B cell (primary cell): ENCODE measurements at regions of chr1 and their contacts with region 1.

Region 1: GRCh38 chr1:26111530-26112406 is at the start of gene PDIK1L:
- DNase-seq: peak; percentile 97
- ATAC-seq: peak; percentile 83
- H3K4me3 ChIP-seq: peak within 1 kb of the TSS; percentile 65 to 95 (median 94)
- H3K4me3 Mint-ChIP-seq: peak within 1 kb of the TSS; percentile 93
- H3K27ac ChIP-seq: peak within 1 kb of the TSS; percentile 60 to 81
- H3K27ac Mint-ChIP-seq: peak within 1 kb of the TSS; percentile 94
- H3K4me1 ChIP-seq: peaks cover 12 to 17% of the 10 kb centered on the region in 2 donors
- H3K4me1 Mint-ChIP-seq: peaks cover 16% of the 10 kb centered on the region
- H3K27me3 ChIP-seq: no peaks in the 10 kb centered on the region
- H3K27me3 Mint-ChIP-seq: no peaks in the 10 kb centered on the region
- CTCF ChIP-seq: no peak
- total RNA-seq, gene PDIK1L: 15.2 and 17.3 TPM in 2 replicates

Region 2: GRCh38 chr1:25905680-25906643 is 205.8 kb before region 1 on chr1 and contains the start of gene STMN1:
- CTCF ChIA-PET with region 1: interaction called, 3 read pairs
- POLR2A ChIA-PET with region 1: no interaction called
- intact Hi-C with region 1: loop called (anchors 1 kb)
- DNase-seq: peak; percentile 93
- ATAC-seq: peak; percentile 75
- H3K4me3 ChIP-seq: peak within 1 kb of the TSS; percentile 62 to 99 (median 63)
- H3K4me3 Mint-ChIP-seq: peak within 1 kb of the TSS; percentile 88
- H3K27ac ChIP-seq: peak within 1 kb of the TSS; percentile 62 to 65
- H3K27ac Mint-ChIP-seq: peak within 1 kb of the TSS; percentile 94
- H3K4me1 ChIP-seq: peaks cover 6 to 22% of the 10 kb centered on the region in 2 donors
- H3K4me1 Mint-ChIP-seq: peaks cover 14% of the 10 kb centered on the region
- H3K27me3 ChIP-seq: no peaks in the 10 kb centered on the region
- H3K27me3 Mint-ChIP-seq: no peaks in the 10 kb centered on the region
- CTCF ChIP-seq: no peak
- total RNA-seq, gene STMN1: 42.2 and 48.0 TPM in 2 replicates

Region 3: DNA sequence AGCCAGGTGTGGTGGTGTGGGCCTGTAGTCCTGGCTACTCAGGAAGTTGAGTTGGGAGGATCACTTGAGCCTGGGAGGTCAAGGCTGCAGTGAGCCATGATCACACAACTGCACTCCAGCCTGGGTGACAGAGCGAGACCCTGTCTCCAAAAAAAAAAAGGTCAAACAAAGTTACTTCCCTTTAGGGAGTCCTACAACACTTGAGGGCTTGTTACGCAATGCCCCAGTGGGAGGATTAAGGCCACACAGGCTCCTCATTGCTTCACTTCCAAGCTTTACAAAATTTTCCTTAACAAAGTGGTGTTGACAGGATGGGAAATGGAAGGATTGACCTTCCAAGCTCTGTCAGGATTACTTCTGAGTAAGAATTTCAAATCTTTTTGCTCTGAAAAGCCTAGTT is 96.4 kb before region 1 on chr1:
- CTCF ChIA-PET with region 1: no interaction called
- POLR2A ChIA-PET with region 1: no interaction called
- intact Hi-C with region 1: no loop called
- DNase-seq: no peak
- ATAC-seq: no peak
- H3K4me3 ChIP-seq: no peak overlapping the region
- H3K4me3 Mint-ChIP-seq: no peak overlapping the region
- H3K27ac ChIP-seq: no peak overlapping the region
- H3K27ac Mint-ChIP-seq: no peak overlapping the region
- H3K4me1 ChIP-seq: no peaks in the 10 kb centered on the region
- H3K4me1 Mint-ChIP-seq: no peaks in the 10 kb centered on the region
- H3K27me3 ChIP-seq: peaks cover 0 to 2% (median 0%) of the 10 kb centered on the region in 4 experiments
- H3K27me3 Mint-ChIP-seq: peaks cover 4% of the 10 kb centered on the region
- CTCF ChIP-seq: no peak

Region 4: GRCh38 chr1:26145041-26145959 is 33.5 kb after region 1 on chr1:
- CTCF ChIA-PET with region 1: interaction called, 336 read pairs
- POLR2A ChIA-PET with region 1: interaction called, 3 read pairs
- intact Hi-C with region 1: no loop called
- DNase-seq: peak; percentile 79
- ATAC-seq: peak; percentile 65
- H3K4me3 ChIP-seq: no peak overlapping the region
- H3K4me3 Mint-ChIP-seq: no peak overlapping the region
- H3K27ac ChIP-seq: no peak overlapping the region
- H3K27ac Mint-ChIP-seq: no peak overlapping the region
- H3K4me1 ChIP-seq: peaks cover 4 to 6% of the 10 kb centered on the region in 2 donors
- H3K4me1 Mint-ChIP-seq: peaks cover 3% of the 10 kb centered on the region
- H3K27me3 ChIP-seq: peaks cover 0 to 6% (median 0%) of the 10 kb centered on the region in 4 experiments
- H3K27me3 Mint-ChIP-seq: peaks cover 14% of the 10 kb centered on the region
- CTCF ChIP-seq: peak; percentile 90

Region 5: DNA sequence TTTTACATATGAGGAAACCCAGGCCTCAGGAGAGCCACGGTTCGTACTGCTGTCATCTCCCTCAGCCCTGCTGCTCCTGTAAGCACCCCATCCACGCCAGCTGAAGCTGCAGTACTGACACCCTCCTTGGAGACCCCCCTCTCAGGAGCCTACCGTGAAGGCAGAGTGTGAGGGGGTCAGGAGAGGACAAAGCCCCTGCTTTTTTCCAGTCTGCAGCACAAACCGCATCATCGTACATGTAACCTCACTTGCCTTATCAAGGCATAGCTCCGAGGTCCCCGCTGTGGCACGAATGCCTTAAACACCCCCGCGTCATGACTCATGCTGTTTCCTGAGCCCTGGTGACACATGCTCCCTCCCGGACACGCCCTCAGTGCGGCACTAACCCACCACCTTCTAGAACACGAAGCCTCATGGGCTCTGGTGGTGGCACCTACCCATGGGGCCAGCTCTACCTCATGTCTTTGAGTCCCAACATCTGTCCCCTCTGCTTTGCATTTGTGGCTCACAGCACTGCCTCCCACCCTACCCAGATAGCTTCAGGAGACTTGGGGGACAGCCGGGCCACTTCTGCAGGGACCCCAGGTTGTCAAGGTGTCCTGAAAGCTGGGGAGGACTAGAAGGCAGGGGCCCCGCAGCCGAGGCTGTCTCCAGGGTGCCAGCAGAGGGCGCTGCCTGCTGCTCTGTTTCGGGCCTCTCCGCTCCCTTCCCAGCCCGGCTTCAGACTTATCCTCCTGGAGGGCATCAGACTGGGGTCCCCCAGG is 173.0 kb after region 1 on chr1:
- CTCF ChIA-PET with region 1: no interaction called
- POLR2A ChIA-PET with region 1: no interaction called
- intact Hi-C with region 1: loop called (anchors 2 kb)
- DNase-seq: peak; percentile 87
- ATAC-seq: peak; percentile 47
- H3K4me3 ChIP-seq: peak overlapping the region in 2 of 5 experiments; percentile 5 to 19
- H3K4me3 Mint-ChIP-seq: peak overlapping the region; percentile 87
- H3K27ac ChIP-seq: peak overlapping the region; percentile 93 to 96
- H3K27ac Mint-ChIP-seq: peak overlapping the region; percentile 97
- H3K4me1 ChIP-seq: peaks cover 79 to 89% of the 10 kb centered on the region in 2 donors
- H3K4me1 Mint-ChIP-seq: peaks cover 88% of the 10 kb centered on the region
- H3K27me3 ChIP-seq: no peaks in the 10 kb centered on the region
- H3K27me3 Mint-ChIP-seq: no peaks in the 10 kb centered on the region
- CTCF ChIP-seq: peak; percentile 77

Region 6: GRCh38 chr1:26431979-26432695 is 320.4 kb after region 1 on chr1 and contains the start of gene DHDDS:
- CTCF ChIA-PET with region 1: no interaction called
- POLR2A ChIA-PET with region 1: no interaction called
- intact Hi-C with region 1: loop called (anchors 1 kb)
- DNase-seq: peak; percentile 99
- ATAC-seq: peak; percentile 97
- H3K4me3 ChIP-seq: peak within 1 kb of the TSS; percentile 62 to 97 (median 77)
- H3K4me3 Mint-ChIP-seq: peak within 1 kb of the TSS; percentile 95
- H3K27ac ChIP-seq: peak within 1 kb of the TSS; percentile 61 to 86
- H3K27ac Mint-ChIP-seq: peak within 1 kb of the TSS; percentile 93
- H3K4me1 ChIP-seq: peaks cover 15 to 21% of the 10 kb centered on the region in 2 donors
- H3K4me1 Mint-ChIP-seq: peaks cover 20% of the 10 kb centered on the region
- H3K27me3 ChIP-seq: no peaks in the 10 kb centered on the region
- H3K27me3 Mint-ChIP-seq: no peaks in the 10 kb centered on the region
- CTCF ChIP-seq: no peak
- total RNA-seq, gene DHDDS: 54.2 and 61.7 TPM in 2 replicates

Region 7: DNA sequence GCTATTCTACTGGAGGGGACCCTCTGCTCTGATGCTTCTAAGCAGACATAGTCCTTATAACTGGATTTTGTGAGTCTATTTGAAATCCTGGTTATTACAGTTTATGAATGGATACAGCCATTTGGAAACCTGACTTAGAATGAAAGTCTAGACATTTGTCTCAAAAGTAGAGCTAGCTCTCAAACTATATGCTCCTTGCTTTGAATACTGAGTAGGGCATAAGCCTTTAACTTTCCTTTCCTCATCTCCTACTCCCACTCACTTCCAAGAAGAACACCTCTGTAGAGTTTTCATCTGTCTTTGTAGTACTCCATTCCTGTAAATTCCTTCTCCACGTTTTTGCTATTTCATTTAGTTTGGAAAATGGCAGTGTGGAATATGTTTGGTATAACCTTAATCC is 575.0 kb after region 1 on chr1:
- CTCF ChIA-PET with region 1: no interaction called
- POLR2A ChIA-PET with region 1: no interaction called
- intact Hi-C with region 1: no loop called
- DNase-seq: no peak
- ATAC-seq: no peak
- H3K4me3 ChIP-seq: no peak overlapping the region
- H3K4me3 Mint-ChIP-seq: no peak overlapping the region
- H3K27ac ChIP-seq: no peak overlapping the region
- H3K27ac Mint-ChIP-seq: no peak overlapping the region
- H3K4me1 ChIP-seq: no peaks in the 10 kb centered on the region
- H3K4me1 Mint-ChIP-seq: peaks cover 2% of the 10 kb centered on the region
- H3K27me3 ChIP-seq: no peaks in the 10 kb centered on the region
- H3K27me3 Mint-ChIP-seq: no peaks in the 10 kb centered on the region
- CTCF ChIP-seq: no peak